Heart right ventricle (tissue), 16 donors: ENCODE measurements at regions of chr10 and their contacts with region 1.

Region 1: GRCh38 chr10:93293999-93294398 is 188.1 kb downstream of the MYOF start:
- DNase-seq: no peak
- ATAC-seq: no peak
- H3K4me3 ChIP-seq: no peak overlapping the region
- H3K27ac ChIP-seq: no peak overlapping the region
- H3K4me1 ChIP-seq: no peaks in the 10 kb centered on the region
- H3K27me3 ChIP-seq: no peaks in the 10 kb centered on the region
- CTCF ChIP-seq: no peak

Region 2: DNA sequence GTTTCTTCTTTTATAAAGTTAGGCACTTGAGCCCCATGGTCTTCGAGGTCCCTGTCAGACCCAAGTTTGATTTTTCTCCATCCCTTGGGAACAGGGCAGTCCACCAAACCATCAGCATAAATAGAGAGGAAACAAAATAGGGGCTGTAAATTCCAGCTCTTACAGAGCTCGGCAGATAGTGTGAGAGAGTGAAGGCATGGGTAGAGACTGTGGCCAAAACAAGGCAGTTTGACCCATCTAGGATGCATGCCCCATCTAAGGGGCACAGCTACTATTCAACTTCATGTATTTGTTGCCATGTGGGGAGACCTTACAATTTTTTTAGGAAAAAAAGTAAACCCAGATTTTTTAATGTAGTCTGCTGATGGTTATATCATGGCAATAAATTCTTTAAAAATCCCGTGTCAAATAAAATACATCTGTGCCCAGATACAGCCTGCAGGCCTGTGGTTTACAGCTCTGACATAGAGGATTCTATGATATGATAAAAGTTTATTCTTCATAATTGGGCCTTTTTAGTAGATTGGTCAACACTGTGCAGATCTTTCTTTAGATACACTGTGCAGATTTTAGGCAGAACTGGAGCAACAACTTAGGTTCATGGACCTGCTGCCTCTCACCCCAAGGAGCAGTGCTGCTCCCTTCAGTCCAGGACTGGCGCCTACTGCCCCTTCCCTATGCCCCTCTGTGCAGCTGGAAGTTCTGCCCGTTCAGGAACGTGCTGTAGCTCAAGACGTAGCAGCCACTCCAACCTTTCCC is 1666.5 kb before region 1 on chr10:
- intact Hi-C with region 1: loop called in 1 of 10 experiments (anchors 5 kb)
- DNase-seq: no peak
- ATAC-seq: peak in 3 of 8 donors; percentile 23 to 62 (median 50)
- H3K4me3 ChIP-seq: peak overlapping the region in 6 of 10 donors; percentile 61 to 86 (median 74)
- H3K27ac ChIP-seq: peak overlapping the region in 8 of 10 donors; percentile 56 to 88 (median 83)
- H3K4me1 ChIP-seq: peaks cover 0 to 37% (median 9%) of the 10 kb centered on the region in 9 donors
- H3K27me3 ChIP-seq: peaks cover 0 to 5% (median 0%) of the 10 kb centered on the region in 7 donors
- CTCF ChIP-seq: peak in 2 of 9 donors; percentile 24 to 25

Region 3: GRCh38 chr10:93309062-93309461 is 15.1 kb after region 1 on chr10:
- intact Hi-C with region 1: no loop called
- DNase-seq: no peak
- ATAC-seq: peak in 4 of 8 donors; percentile 52 to 84 (median 65)
- H3K4me3 ChIP-seq: no peak overlapping the region
- H3K27ac ChIP-seq: no peak overlapping the region
- H3K4me1 ChIP-seq: peaks cover 0 to 5% (median 0%) of the 10 kb centered on the region in 9 donors
- H3K27me3 ChIP-seq: no peaks in the 10 kb centered on the region
- CTCF ChIP-seq: no peak